MCF 10A (cell line): ENCODE measurements at regions of chr2 and their contacts with region 1.

Region 1: DNA sequence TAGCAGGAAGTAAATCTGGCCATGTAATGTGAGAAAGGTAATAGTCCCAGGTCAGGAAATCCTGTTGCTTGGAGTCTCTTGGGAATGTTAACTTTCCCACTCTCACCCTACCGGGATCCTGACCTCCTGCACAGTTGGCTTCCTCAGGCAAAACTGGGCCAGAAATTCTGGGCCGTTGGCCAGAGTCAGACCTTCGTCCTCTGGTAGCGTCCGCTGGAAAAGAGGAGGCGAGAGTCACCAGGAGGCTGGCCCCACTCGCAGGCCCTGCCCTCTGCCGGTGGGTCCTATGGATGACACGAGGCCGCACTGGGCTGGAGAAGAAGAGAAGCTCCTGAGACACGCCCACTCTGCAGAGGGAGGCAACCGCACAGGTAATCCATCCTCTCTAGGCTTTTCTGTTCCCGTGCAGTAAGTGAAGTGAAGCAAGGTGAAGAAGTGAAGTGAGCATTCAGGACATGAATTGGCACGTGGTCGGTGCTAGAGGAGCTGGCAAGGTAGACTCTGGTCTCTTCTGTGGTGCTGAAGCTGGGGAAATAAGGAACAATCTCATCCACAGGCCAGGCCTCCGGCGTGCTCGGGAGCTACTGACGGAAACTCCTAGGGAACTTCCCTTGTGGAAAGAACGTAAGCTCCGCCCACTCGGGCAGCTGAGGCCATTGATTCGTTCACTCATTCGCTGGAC is 182.7 kb upstream of the GLI2 start:
- DNase-seq: peak; percentile 94
- H3K4me3 Mint-ChIP-seq: no peak overlapping the region
- H3K27ac Mint-ChIP-seq: no peak overlapping the region
- H3K4me1 Mint-ChIP-seq: peaks cover 6% of the 10 kb centered on the region
- H3K27me3 Mint-ChIP-seq: no peaks in the 10 kb centered on the region
- CTCF ChIP-seq: peak; percentile 81

Region 2: DNA sequence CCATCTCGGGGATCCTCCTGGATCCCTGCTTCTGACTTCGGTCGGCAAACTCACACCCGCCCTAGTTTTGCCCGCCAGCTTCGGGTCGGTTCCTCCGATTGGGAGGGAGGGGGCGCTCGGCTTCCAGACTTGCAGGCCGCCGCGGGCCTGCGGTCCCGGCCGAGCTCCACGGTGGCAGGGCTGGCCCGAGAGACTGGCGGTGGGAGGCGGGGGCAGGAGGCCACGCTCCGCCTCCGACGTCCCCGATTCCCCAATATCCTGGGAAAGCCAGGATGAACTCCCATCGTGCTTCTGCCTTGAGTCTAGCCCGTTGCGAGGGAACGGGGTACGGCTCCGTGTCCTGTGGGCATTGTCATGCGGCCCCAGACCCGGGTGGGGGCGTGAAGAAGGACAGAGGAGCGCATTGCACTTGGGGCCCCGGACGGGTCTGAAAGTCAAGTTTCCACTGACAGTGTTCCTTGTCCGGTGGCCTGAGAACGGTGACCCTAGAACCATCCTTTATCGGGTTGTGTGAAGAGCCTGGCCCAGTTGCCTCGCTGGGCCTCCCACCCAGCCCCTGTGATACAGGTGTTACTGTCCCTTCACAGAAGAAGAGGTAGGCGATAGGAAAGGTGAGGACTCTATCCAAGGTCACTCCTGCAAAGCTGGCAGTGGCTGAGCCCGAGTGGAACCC is 209.4 kb before region 1 on chr2:
- CTCF ChIA-PET with region 1: no interaction called
- POLR2A ChIA-PET with region 1: no interaction called
- intact Hi-C with region 1: loop called (anchors 1 kb)
- DNase-seq: peak; percentile 70
- H3K4me3 Mint-ChIP-seq: peak overlapping the region; percentile 4
- H3K27ac Mint-ChIP-seq: no peak overlapping the region
- H3K4me1 Mint-ChIP-seq: peaks cover 6% of the 10 kb centered on the region
- H3K27me3 Mint-ChIP-seq: peaks cover 12% of the 10 kb centered on the region
- CTCF ChIP-seq: peak; percentile 84

Region 3: DNA sequence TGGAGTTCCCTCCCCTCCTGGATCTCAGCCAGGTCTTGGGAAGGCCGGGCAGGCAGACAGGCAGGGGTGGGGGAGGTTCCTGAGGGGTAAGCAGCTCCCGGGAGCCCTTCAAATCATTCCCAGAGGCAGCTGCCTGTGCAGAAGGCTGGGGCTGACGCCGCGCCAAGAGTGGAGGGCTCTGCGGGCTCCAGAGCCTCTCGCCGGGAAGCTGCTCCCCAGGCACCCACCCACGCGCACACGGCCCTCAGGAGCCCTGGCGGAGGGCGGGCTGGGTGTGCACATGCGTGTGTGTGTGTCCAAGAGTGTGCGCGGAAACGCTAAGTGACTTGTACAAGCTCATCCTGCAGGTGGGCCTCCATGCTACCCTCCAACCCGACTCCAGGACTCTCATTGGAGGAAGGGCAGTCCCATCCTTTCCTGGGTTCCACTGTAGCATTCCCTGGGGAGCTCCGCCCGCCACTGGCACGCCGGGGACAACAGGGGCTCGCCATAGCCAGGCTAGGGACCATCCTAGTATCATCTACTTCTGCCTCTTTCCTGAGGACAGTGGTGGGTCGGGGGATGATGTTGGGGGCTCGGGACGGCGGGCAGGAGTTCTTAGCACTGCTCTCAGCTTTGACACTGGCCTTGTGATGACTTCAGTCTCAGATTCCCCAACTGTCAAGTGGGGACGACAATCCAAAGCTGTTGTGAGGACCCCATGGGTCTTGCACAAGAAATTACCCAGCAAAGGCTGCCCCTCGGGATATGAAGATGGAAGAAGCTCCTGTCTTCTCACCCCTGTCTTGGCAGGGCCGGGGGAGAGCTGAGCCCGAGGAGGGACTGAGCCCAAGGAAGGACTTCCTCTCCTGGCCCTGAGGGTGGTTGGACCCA is 156.7 kb before region 1 on chr2:
- CTCF ChIA-PET with region 1: no interaction called
- POLR2A ChIA-PET with region 1: no interaction called
- intact Hi-C with region 1: no loop called
- DNase-seq: no peak
- H3K4me3 Mint-ChIP-seq: no peak overlapping the region
- H3K27ac Mint-ChIP-seq: no peak overlapping the region
- H3K4me1 Mint-ChIP-seq: no peaks in the 10 kb centered on the region
- H3K27me3 Mint-ChIP-seq: no peaks in the 10 kb centered on the region
- CTCF ChIP-seq: no peak

Region 4: GRCh38 chr2:120520929-120521912 is 31.7 kb before region 1 on chr2:
- CTCF ChIA-PET with region 1: no interaction called
- POLR2A ChIA-PET with region 1: no interaction called
- intact Hi-C with region 1: no loop called
- DNase-seq: peak; percentile 68
- H3K4me3 Mint-ChIP-seq: no peak overlapping the region
- H3K27ac Mint-ChIP-seq: no peak overlapping the region
- H3K4me1 Mint-ChIP-seq: peaks cover 8% of the 10 kb centered on the region
- H3K27me3 Mint-ChIP-seq: peaks cover 9% of the 10 kb centered on the region
- CTCF ChIP-seq: peak; percentile 93